Activated CD4-positive, alpha-beta memory T cell treated with anti-CD3 and anti-CD28 coated beads for 36 hours (primary cell): ENCODE measurements at regions of chr2 and their contacts with region 1.

Region 1: DNA sequence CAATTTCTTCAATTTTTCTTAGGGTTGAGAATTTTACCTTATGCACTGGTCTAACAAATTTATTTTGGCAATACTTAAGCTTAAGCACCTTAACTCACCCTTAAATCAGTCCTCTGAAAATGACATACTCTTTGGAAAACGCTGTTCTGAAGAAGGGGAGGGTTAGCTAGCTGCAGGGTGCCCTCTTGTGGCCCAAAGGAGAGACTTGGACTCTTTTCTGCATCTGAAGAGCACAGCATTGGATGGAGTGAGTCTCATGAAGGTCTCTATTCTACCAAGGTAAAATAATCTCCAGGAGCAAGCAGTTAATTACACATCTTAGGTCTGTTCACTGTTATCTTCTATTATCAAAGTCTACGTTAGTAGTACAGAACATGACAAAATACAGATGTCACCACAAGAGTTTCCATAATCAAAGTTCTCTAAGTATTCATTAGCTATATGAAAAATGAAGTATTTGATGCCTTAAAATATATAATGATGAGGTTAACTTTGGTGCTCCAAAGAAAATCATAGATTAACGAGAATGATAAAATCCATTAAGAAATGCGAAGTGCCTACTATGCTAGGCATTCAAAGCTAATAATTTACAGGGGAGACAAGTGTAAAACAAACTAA is 24.4 kb downstream of the PUM2 start:
- DNase-seq: peak; percentile 66
- H3K4me3 Mint-ChIP-seq: no peak overlapping the region
- H3K27ac Mint-ChIP-seq: peak overlapping the region; percentile 32
- H3K4me1 Mint-ChIP-seq: peaks cover 71% of the 10 kb centered on the region
- H3K27me3 Mint-ChIP-seq: no peaks in the 10 kb centered on the region

Region 2: GRCh38 chr2:20091305-20091991 is 234.8 kb before region 1 on chr2:
- CTCF ChIA-PET with region 1: no interaction called
- POLR2A ChIA-PET with region 1: no interaction called
- intact Hi-C with region 1: no loop called
- DNase-seq: no peak
- H3K4me3 Mint-ChIP-seq: no peak overlapping the region
- H3K27ac Mint-ChIP-seq: no peak overlapping the region
- H3K4me1 Mint-ChIP-seq: peaks cover 2% of the 10 kb centered on the region
- H3K27me3 Mint-ChIP-seq: peaks cover 5% of the 10 kb centered on the region

Region 3: GRCh38 chr2:20282916-20283592 is 43.2 kb before region 1 on chr2:
- CTCF ChIA-PET with region 1: interaction called, 22 read pairs
- POLR2A ChIA-PET with region 1: no interaction called
- intact Hi-C with region 1: no loop called
- DNase-seq: no peak
- H3K4me3 Mint-ChIP-seq: no peak overlapping the region
- H3K27ac Mint-ChIP-seq: no peak overlapping the region
- H3K4me1 Mint-ChIP-seq: peaks cover 3% of the 10 kb centered on the region
- H3K27me3 Mint-ChIP-seq: no peaks in the 10 kb centered on the region

Region 4: GRCh38 chr2:20304411-20304810 is 21.9 kb before region 1 on chr2:
- CTCF ChIA-PET with region 1: interaction called, 25 read pairs
- POLR2A ChIA-PET with region 1: no interaction called
- intact Hi-C with region 1: no loop called
- DNase-seq: no peak
- H3K4me3 Mint-ChIP-seq: no peak overlapping the region
- H3K27ac Mint-ChIP-seq: no peak overlapping the region
- H3K4me1 Mint-ChIP-seq: peaks cover 5% of the 10 kb centered on the region
- H3K27me3 Mint-ChIP-seq: no peaks in the 10 kb centered on the region

Region 5: DNA sequence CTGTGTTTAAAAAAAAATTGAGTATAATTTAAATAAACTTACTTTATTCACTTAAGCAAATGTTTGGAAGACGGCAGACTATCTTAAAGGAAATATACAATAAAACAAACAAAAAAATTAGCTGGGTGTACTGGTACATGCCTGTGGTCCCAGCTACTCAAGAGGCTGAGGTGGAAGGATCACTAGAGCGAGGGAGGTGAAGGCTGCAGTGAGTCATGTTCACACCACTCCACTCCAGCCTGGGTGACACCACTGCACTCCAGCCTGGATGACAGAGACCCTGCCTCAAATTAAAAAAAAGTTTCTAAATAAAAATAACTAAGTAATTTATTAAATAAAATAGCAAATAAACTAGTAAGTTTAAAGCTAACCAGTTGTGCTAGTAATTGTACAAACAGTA is 16.9 kb after region 1 on chr2:
- CTCF ChIA-PET with region 1: interaction called, 66 read pairs
- POLR2A ChIA-PET with region 1: interaction called, 4 read pairs
- intact Hi-C with region 1: loop called (anchors 2 kb)
- DNase-seq: peak; percentile 36
- H3K4me3 Mint-ChIP-seq: no peak overlapping the region
- H3K27ac Mint-ChIP-seq: no peak overlapping the region
- H3K4me1 Mint-ChIP-seq: peaks cover 76% of the 10 kb centered on the region
- H3K27me3 Mint-ChIP-seq: no peaks in the 10 kb centered on the region

Region 6: GRCh38 chr2:20411361-20411894 is 85.2 kb after region 1 on chr2:
- CTCF ChIA-PET with region 1: interaction called, 14 read pairs
- POLR2A ChIA-PET with region 1: no interaction called
- intact Hi-C with region 1: no loop called
- DNase-seq: peak; percentile 83
- H3K4me3 Mint-ChIP-seq: no peak overlapping the region
- H3K27ac Mint-ChIP-seq: no peak overlapping the region
- H3K4me1 Mint-ChIP-seq: no peaks in the 10 kb centered on the region
- H3K27me3 Mint-ChIP-seq: no peaks in the 10 kb centered on the region

Region 7: DNA sequence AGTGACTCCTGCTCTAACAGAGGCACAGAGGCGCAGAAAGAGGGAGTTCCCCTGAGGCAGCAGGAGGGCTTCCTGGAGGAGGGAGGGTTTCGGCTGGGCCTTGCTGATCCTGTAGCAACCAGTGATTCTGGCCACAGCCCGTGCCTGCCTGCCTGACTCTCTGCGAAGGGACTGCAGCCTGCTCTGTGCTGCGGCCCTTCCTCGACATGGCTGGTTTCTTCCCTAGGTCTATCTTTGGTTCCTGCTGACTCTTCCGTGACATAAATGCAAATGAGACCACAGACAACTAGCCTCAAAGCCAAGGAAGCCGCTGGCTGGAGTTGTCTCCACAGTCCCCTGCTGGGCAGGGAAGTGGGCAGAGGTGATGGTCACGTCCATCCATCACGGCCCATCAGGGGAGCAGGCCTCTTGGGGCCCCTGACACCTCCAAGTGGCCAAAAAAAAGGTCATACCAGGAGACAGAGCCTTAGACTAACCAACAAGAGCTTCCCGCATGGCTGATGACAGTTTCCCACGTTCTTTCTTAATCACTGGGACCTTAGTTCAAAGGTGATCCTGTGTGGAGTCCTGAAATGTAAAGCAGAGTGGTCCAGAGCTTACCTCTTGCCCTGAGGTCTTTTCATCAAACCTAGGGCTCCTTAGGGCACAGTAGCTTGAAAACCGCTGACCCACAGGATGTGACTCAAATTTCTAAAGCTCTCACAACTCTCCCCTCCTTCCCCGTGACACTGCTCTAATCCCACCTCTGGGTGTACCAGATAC is 269.3 kb after region 1 on chr2:
- CTCF ChIA-PET with region 1: no interaction called
- POLR2A ChIA-PET with region 1: no interaction called
- intact Hi-C with region 1: no loop called
- DNase-seq: peak; percentile 40
- H3K4me3 Mint-ChIP-seq: no peak overlapping the region
- H3K27ac Mint-ChIP-seq: peak overlapping the region; percentile 79
- H3K4me1 Mint-ChIP-seq: peaks cover 5% of the 10 kb centered on the region
- H3K27me3 Mint-ChIP-seq: no peaks in the 10 kb centered on the region

Region 8: GRCh38 chr2:20625491-20626391 is 299.5 kb after region 1 on chr2:
- CTCF ChIA-PET with region 1: no interaction called
- POLR2A ChIA-PET with region 1: no interaction called
- intact Hi-C with region 1: no loop called
- DNase-seq: no peak
- H3K4me3 Mint-ChIP-seq: no peak overlapping the region
- H3K27ac Mint-ChIP-seq: no peak overlapping the region
- H3K4me1 Mint-ChIP-seq: no peaks in the 10 kb centered on the region
- H3K27me3 Mint-ChIP-seq: no peaks in the 10 kb centered on the region

Region 9: GRCh38 chr2:20642055-20642971 is 316.0 kb after region 1 on chr2:
- CTCF ChIA-PET with region 1: interaction called, 18 read pairs
- POLR2A ChIA-PET with region 1: no interaction called
- intact Hi-C with region 1: no loop called
- DNase-seq: peak; percentile 81
- H3K4me3 Mint-ChIP-seq: no peak overlapping the region
- H3K27ac Mint-ChIP-seq: no peak overlapping the region
- H3K4me1 Mint-ChIP-seq: peaks cover 2% of the 10 kb centered on the region
- H3K27me3 Mint-ChIP-seq: no peaks in the 10 kb centered on the region